Calu3 (cell line): ENCODE measurements at regions of chr20 and their contacts with region 1.

Region 1: GRCh38 chr20:38049800-38050199 is 16.3 kb downstream of the RPRD1B start:
- DNase-seq: no peak
- H3K4me3 Mint-ChIP-seq: no peak overlapping the region
- H3K27ac Mint-ChIP-seq: no peak overlapping the region
- H3K4me1 Mint-ChIP-seq: peaks cover 15% of the 10 kb centered on the region
- H3K27me3 Mint-ChIP-seq: no peaks in the 10 kb centered on the region
- CTCF ChIP-seq: no peak

Region 2: DNA sequence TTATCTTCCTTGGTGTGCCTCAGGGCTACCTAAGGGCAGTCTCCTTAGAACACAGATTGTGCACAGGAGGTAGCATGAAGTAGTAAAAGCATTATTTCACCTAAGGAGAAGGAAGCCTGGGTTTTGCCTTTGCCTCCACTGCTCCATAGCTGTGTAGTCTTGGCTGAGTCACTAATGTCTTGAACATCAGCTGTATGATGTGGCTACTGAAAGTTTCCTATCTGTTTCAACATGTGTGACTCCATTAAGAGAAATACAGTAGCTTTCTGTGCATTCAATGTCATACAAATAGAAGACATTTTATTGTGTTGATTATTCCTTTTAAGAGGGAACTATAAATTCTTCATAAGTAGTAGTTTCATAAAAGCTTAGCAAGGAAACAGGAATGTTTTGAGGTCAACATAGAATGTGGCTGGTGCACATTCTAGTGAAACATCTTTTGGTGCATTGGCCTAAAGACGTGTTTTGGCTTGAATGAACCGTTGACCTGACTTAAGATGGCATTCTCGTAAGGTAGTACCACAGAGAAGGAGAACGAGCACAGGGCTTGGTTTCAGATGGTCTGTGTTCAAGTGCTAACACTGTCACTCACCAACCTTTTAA is 285.4 kb before region 1 on chr20:
- CTCF ChIA-PET with region 1: no interaction called
- intact Hi-C with region 1: no loop called
- DNase-seq: no peak
- H3K4me3 Mint-ChIP-seq: no peak overlapping the region
- H3K27ac Mint-ChIP-seq: no peak overlapping the region
- H3K4me1 Mint-ChIP-seq: no peaks in the 10 kb centered on the region
- H3K27me3 Mint-ChIP-seq: no peaks in the 10 kb centered on the region
- CTCF ChIP-seq: no peak

Region 3: DNA sequence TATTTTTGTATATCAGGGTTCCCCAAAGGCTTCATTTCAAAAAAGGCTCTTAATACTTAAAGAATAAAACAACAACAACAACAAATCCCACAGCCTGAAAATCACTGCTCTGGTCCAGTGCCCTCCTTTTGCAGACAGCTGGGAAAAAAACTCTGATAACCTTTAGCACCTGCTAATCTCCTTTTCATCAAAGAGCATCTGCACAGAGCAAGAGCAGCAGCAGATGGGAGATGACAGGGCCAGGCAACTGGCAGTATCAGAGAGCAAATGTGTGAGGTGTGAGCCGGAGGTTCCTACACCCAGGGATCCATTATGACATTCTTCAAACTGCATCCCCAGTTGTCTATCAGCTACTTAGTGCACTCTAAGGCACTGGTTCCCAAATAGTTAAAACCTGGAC is 42.3 kb before region 1 on chr20:
- CTCF ChIA-PET with region 1: no interaction called
- intact Hi-C with region 1: no loop called
- DNase-seq: no peak
- H3K4me3 Mint-ChIP-seq: no peak overlapping the region
- H3K27ac Mint-ChIP-seq: no peak overlapping the region
- H3K4me1 Mint-ChIP-seq: no peaks in the 10 kb centered on the region
- H3K27me3 Mint-ChIP-seq: no peaks in the 10 kb centered on the region
- CTCF ChIP-seq: no peak

Region 4: GRCh38 chr20:38304845-38305447 is 255.1 kb after region 1 on chr20:
- CTCF ChIA-PET with region 1: no interaction called
- intact Hi-C with region 1: loop called (anchors 5 kb)
- DNase-seq: peak; percentile 84
- H3K4me3 Mint-ChIP-seq: no peak overlapping the region
- H3K27ac Mint-ChIP-seq: no peak overlapping the region
- H3K4me1 Mint-ChIP-seq: peaks cover 8% of the 10 kb centered on the region
- H3K27me3 Mint-ChIP-seq: peaks cover 52% of the 10 kb centered on the region
- CTCF ChIP-seq: peak; percentile 78